Dendritic cell treated with granulocyte-macrophage colony-stimulating factor and Interleukin-4, amounts not matched to agents 40 ng/mL and 50 ng/mL, for 4 days (primary cell): ENCODE measurements at regions of chr3 and their contacts with region 1.

Region 1: GRCh38 chr3:121995161-121996137 is 26.6 kb downstream of the ILDR1 start:
- H3K4me3 Mint-ChIP-seq: peak overlapping the region; percentile 44
- H3K27ac Mint-ChIP-seq: peak overlapping the region; percentile 79
- H3K4me1 Mint-ChIP-seq: peaks cover 66% of the 10 kb centered on the region
- H3K27me3 Mint-ChIP-seq: no peaks in the 10 kb centered on the region

Region 2: GRCh38 chr3:121749276-121750086 is 246.0 kb before region 1 on chr3 and contains the start of gene GOLGB1:
- intact Hi-C with region 1: loop called (anchors 5 kb)
- H3K4me3 Mint-ChIP-seq: no peak within 1 kb of the TSS
- H3K27ac Mint-ChIP-seq: no peak within 1 kb of the TSS
- H3K4me1 Mint-ChIP-seq: peaks cover 7% of the 10 kb centered on the region
- H3K27me3 Mint-ChIP-seq: peaks cover 10% of the 10 kb centered on the region

Region 3: DNA sequence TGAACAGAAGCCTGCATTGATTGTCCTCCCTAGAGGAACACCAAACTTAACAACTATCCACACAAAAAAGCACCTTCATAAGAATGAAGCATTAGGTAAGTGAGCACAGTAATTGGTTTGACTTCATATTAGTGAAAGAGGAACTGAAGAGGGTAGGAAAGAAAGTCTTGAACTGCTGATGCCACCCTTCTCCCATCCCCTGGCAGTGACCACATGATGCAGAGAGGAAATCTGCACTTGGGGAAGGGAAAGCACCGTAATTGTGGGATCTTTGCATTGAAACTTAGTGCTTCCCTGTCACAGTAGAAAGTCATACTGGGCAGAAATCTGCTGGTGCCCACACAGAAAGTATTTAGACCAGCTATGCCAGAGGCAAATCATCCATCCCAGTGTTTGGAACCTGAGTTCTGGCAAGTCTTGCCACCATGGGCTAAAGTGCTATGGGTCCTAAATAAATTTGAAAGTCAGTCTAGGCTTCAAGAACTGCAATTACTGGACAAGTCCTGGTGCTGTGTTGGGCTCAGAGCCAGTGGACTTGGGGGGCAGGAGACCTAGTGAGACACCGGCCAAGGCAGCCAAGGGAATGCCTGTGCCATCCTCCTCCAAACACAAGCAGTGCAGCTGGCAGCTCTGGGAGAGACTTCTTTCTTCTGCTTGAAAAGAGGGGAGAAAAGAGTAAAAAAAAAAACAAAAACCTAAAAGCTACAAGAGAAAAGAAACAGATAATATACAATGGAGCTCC is 37.6 kb before region 1 on chr3:
- intact Hi-C with region 1: loop called (anchors 5 kb)
- H3K4me3 Mint-ChIP-seq: peak overlapping the region; percentile 46
- H3K27ac Mint-ChIP-seq: peak overlapping the region; percentile 88
- H3K4me1 Mint-ChIP-seq: peaks cover 37% of the 10 kb centered on the region
- H3K27me3 Mint-ChIP-seq: no peaks in the 10 kb centered on the region

Region 4: DNA sequence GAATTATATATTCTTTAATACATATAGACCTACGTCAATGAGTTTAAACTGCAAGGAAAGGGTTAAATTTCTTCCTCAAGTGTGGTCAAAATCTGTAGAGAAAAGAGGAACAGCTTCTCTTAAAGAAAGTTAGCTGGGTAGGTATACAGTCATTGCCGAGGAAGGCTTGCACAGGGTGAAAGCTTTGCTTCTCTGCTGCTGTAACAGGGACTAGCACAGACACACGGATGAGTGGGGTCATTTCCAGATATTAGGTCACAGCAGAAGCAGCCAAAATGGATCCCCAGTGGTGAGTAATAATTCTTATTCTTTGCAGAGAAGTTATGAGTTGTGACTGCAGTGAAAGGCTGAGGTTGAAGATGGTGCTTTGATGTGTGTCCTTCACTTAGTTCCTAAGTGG is 59.8 kb after region 1 on chr3 and contains the start of gene CD86:
- intact Hi-C with region 1: loop called (anchors 5 kb)
- H3K4me3 Mint-ChIP-seq: peak within 1 kb of the TSS; percentile 84
- H3K27ac Mint-ChIP-seq: peak within 1 kb of the TSS; percentile 89
- H3K4me1 Mint-ChIP-seq: peaks cover 29% of the 10 kb centered on the region
- H3K27me3 Mint-ChIP-seq: no peaks in the 10 kb centered on the region

Region 5: GRCh38 chr3:122092460-122093165 is 97.2 kb after region 1 on chr3:
- intact Hi-C with region 1: loop called (anchors 5 kb)
- H3K4me3 Mint-ChIP-seq: peak overlapping the region; percentile 48
- H3K27ac Mint-ChIP-seq: peak overlapping the region; percentile 81
- H3K4me1 Mint-ChIP-seq: peaks cover 39% of the 10 kb centered on the region
- H3K27me3 Mint-ChIP-seq: no peaks in the 10 kb centered on the region

Region 6: GRCh38 chr3:122123850-122124249 is 128.4 kb after region 1 on chr3:
- intact Hi-C with region 1: no loop called
- H3K4me3 Mint-ChIP-seq: no peak overlapping the region
- H3K27ac Mint-ChIP-seq: peak overlapping the region; percentile 7
- H3K4me1 Mint-ChIP-seq: peaks cover 26% of the 10 kb centered on the region
- H3K27me3 Mint-ChIP-seq: no peaks in the 10 kb centered on the region

Region 7: GRCh38 chr3:122245513-122246174 is 250.2 kb after region 1 on chr3:
- intact Hi-C with region 1: no loop called
- H3K4me3 Mint-ChIP-seq: peak overlapping the region; percentile 70
- H3K27ac Mint-ChIP-seq: peak overlapping the region; percentile 79
- H3K4me1 Mint-ChIP-seq: peaks cover 29% of the 10 kb centered on the region
- H3K27me3 Mint-ChIP-seq: no peaks in the 10 kb centered on the region

Region 8: GRCh38 chr3:122258757-122259371 is 263.4 kb after region 1 on chr3:
- intact Hi-C with region 1: loop called (anchors 5 kb)
- H3K4me3 Mint-ChIP-seq: no peak overlapping the region
- H3K27ac Mint-ChIP-seq: no peak overlapping the region
- H3K4me1 Mint-ChIP-seq: peaks cover 51% of the 10 kb centered on the region
- H3K27me3 Mint-ChIP-seq: no peaks in the 10 kb centered on the region

Region 9: GRCh38 chr3:122555275-122556071 is 560.0 kb after region 1 on chr3:
- intact Hi-C with region 1: no loop called
- H3K4me3 Mint-ChIP-seq: no peak overlapping the region
- H3K27ac Mint-ChIP-seq: no peak overlapping the region
- H3K4me1 Mint-ChIP-seq: peaks cover 13% of the 10 kb centered on the region
- H3K27me3 Mint-ChIP-seq: no peaks in the 10 kb centered on the region